Activated B cell treated with CpG ODN at 0.5 μM for 24 hours (primary cell): ENCODE measurements at regions of chr16 and their contacts with region 1.

Region 1: DNA sequence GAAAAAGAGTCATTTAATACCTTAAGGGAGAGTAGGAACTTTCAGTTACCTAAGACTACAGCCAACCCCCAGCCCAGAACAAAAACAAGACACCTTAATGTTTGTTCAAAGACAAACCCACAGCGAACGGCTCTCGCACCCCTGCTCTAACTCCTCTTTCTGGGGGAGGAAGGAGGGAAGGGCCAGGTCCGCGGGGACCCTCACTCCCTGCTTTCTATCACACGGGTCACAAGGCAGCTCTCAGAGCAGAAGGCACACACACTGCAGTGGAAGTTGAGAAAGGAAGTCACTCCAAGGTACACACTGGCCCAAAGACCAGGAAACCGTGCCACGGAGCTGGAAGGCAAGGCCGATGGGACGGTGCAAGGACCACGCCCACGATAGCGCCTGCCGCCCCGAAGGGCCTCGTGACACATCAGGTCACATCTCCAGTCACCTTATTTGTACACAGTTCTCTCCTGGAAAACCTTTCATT is 10.0 kb downstream of the LITAFD start:
- DNase-seq: peak; percentile 34
- ATAC-seq: peak; percentile 5
- H3K4me3 Mint-ChIP-seq: peak overlapping the region; percentile 68
- H3K27ac Mint-ChIP-seq: peak overlapping the region; percentile 91
- H3K4me1 Mint-ChIP-seq: peaks cover 39% of the 10 kb centered on the region
- H3K27me3 Mint-ChIP-seq: no peaks in the 10 kb centered on the region
- CTCF ChIP-seq: no peak

Region 2: GRCh38 chr16:8818504-8819270 is 73.5 kb before region 1 on chr16:
- CTCF ChIA-PET with region 1: no interaction called
- POLR2A ChIA-PET with region 1: interaction called, 10 read pairs
- intact Hi-C with region 1: no loop called
- DNase-seq: no peak
- ATAC-seq: peak; percentile 93
- H3K4me3 Mint-ChIP-seq: no peak overlapping the region
- H3K27ac Mint-ChIP-seq: peak overlapping the region; percentile 52
- H3K4me1 Mint-ChIP-seq: peaks cover 22% of the 10 kb centered on the region
- H3K27me3 Mint-ChIP-seq: no peaks in the 10 kb centered on the region
- CTCF ChIP-seq: no peak

Region 3: GRCh38 chr16:8868416-8869211 is 23.5 kb before region 1 on chr16 and contains the start of gene CARHSP1:
- CTCF ChIA-PET with region 1: interaction called, 4 read pairs
- POLR2A ChIA-PET with region 1: interaction called, 50 read pairs
- intact Hi-C with region 1: loop called (anchors 1 kb)
- DNase-seq: peak; percentile 77
- ATAC-seq: peak; percentile 79
- H3K4me3 Mint-ChIP-seq: peak within 1 kb of the TSS; percentile 93
- H3K27ac Mint-ChIP-seq: peak within 1 kb of the TSS; percentile 85
- H3K4me1 Mint-ChIP-seq: peaks cover 60% of the 10 kb centered on the region
- H3K27me3 Mint-ChIP-seq: no peaks in the 10 kb centered on the region
- CTCF ChIP-seq: no peak
- total RNA-seq, gene CARHSP1: 21.3 and 27.0 TPM in 2 replicates

Region 4: DNA sequence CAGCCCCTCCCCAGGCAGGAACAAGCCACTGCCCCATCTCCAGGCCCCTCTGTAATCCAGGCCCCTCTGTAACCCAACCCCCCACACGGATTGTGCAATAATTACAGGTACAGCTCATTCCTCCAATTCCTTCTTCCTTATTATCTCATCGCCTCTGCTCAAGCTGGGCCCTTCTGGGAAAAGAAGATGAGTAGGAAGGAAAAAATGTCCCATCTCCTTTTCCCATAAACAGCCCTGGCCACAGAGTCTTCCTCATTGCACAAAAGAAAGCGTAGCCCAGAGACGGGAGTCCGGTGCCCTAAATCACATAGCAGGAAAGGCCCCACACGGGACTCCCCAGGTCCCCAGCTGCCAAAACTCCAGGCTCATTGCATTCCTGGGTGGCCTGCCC is 13.6 kb before region 1 on chr16:
- CTCF ChIA-PET with region 1: interaction called, 17 read pairs
- POLR2A ChIA-PET with region 1: no interaction called
- intact Hi-C with region 1: no loop called
- DNase-seq: no peak
- ATAC-seq: no peak
- H3K4me3 Mint-ChIP-seq: no peak overlapping the region
- H3K27ac Mint-ChIP-seq: no peak overlapping the region
- H3K4me1 Mint-ChIP-seq: peaks cover 6% of the 10 kb centered on the region
- H3K27me3 Mint-ChIP-seq: no peaks in the 10 kb centered on the region
- CTCF ChIP-seq: no peak

Region 5: DNA sequence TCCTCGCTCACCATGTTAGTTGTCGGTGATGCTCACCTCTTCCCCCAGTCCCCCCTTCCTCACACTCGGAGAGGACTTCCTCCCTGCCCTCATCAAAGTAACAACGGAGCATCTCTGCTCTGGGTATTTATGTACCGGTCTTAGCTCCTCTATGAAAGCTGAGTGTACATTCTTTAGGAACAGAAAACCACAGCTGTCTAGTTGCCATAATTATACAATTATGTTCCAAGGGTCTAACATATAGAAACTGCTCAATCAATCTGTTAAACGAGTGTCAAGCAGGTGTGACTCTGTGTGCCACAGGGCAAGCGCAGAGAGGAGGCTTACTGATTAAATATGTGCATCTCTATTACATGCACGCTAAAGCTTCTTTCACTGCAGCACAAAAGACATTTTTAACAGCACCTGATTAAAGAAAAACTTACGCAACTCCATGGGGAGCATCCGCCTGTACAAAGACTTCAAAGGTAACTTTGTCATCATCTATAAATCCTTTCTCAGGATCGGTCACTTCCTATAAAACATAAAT is 27.9 kb after region 1 on chr16:
- CTCF ChIA-PET with region 1: no interaction called
- POLR2A ChIA-PET with region 1: no interaction called
- intact Hi-C with region 1: no loop called
- DNase-seq: no peak
- ATAC-seq: no peak
- H3K4me3 Mint-ChIP-seq: no peak overlapping the region
- H3K27ac Mint-ChIP-seq: no peak overlapping the region
- H3K4me1 Mint-ChIP-seq: peaks cover 23% of the 10 kb centered on the region
- H3K27me3 Mint-ChIP-seq: no peaks in the 10 kb centered on the region
- CTCF ChIP-seq: no peak

Region 6: GRCh38 chr16:8936421-8936820 is 44.3 kb after region 1 on chr16:
- CTCF ChIA-PET with region 1: interaction called, 10 read pairs
- POLR2A ChIA-PET with region 1: interaction called, 4 read pairs
- intact Hi-C with region 1: loop called (anchors 2 kb)
- DNase-seq: no peak
- ATAC-seq: peak; percentile 98
- H3K4me3 Mint-ChIP-seq: no peak overlapping the region
- H3K27ac Mint-ChIP-seq: peak overlapping the region; percentile 50
- H3K4me1 Mint-ChIP-seq: peaks cover 92% of the 10 kb centered on the region
- H3K27me3 Mint-ChIP-seq: no peaks in the 10 kb centered on the region
- CTCF ChIP-seq: no peak

Region 7: DNA sequence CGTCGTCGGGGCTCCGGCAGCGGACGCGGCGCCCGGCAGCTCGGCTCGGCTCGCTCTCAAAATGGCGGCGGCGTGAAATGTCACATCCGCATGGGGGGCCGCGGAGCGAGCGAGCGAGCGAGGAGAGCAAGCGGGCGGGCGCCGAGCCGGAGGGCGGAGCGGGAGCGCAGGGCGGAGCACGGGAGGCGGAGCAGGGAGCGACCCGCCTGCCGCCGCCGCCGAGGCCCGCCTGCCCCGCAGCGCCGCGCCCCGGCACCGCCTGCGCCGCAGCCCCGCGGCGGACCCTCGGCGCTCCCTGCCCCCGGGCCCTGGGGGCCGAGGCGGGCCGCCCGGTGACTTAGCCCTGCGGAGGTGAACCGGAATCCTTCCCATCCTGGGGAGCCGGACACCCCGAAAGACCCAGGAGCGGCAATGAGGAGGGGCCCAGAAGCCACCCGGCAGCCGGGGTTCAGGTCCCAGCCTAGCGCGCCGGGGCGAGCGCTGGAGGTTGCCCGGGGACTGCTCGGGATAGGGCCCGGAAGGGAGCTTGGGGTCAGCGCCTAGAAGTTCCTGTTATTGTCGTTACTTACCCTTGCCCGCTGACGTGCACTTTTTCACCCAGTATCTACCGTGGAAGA is 71.8 kb after region 1 on chr16 and contains the start of gene USP7:
- CTCF ChIA-PET with region 1: interaction called, 5 read pairs
- POLR2A ChIA-PET with region 1: interaction called, 22 read pairs
- intact Hi-C with region 1: loop called (anchors 1 kb)
- DNase-seq: peak; percentile 90
- ATAC-seq: peak; percentile 90
- H3K4me3 Mint-ChIP-seq: peak within 1 kb of the TSS; percentile 81
- H3K27ac Mint-ChIP-seq: peak within 1 kb of the TSS; percentile 93
- H3K4me1 Mint-ChIP-seq: peaks cover 35% of the 10 kb centered on the region
- H3K27me3 Mint-ChIP-seq: no peaks in the 10 kb centered on the region
- CTCF ChIP-seq: no peak
- total RNA-seq, gene USP7: 173 and 193 TPM in 2 replicates

Region 8: GRCh38 chr16:10181196-10182162 is 1289.3 kb after region 1 on chr16:
- CTCF ChIA-PET with region 1: no interaction called
- POLR2A ChIA-PET with region 1: no interaction called
- intact Hi-C with region 1: loop called (anchors 10 kb)
- DNase-seq: peak; percentile 59
- ATAC-seq: peak; percentile 46
- H3K4me3 Mint-ChIP-seq: peak overlapping the region; percentile 78
- H3K27ac Mint-ChIP-seq: no peak overlapping the region
- H3K4me1 Mint-ChIP-seq: peaks cover 24% of the 10 kb centered on the region
- H3K27me3 Mint-ChIP-seq: peaks cover 57% of the 10 kb centered on the region
- CTCF ChIP-seq: peak; percentile 54